Sigmoid colon (tissue), 7 donors: ENCODE measurements at regions of chr11 and their contacts with region 1.

Region 1: GRCh38 chr11:14773755-14774154 is 118.3 kb downstream of the CYP2R1 start:
- DNase-seq: no peak
- H3K4me3 ChIP-seq: no peak overlapping the region
- H3K27ac ChIP-seq: peak overlapping the region in 2 of 4 donors; percentile 24 to 40
- H3K4me1 ChIP-seq: peaks cover 0 to 46% (median 22%) of the 10 kb centered on the region in 4 donors
- H3K27me3 ChIP-seq: no peaks in the 10 kb centered on the region
- CTCF ChIP-seq: no peak
- EP300 ChIP-seq: no peak
- POLR2A ChIP-seq: no peak

Region 2: GRCh38 chr11:14537134-14537599 is 236.6 kb before region 1 on chr11:
- intact Hi-C with region 1: loop called (anchors 10 kb)
- DNase-seq: no peak
- H3K4me3 ChIP-seq: no peak overlapping the region
- H3K27ac ChIP-seq: peak overlapping the region in 3 of 4 donors; percentile 57 to 73 (median 73)
- H3K4me1 ChIP-seq: peaks cover 0 to 49% (median 46%) of the 10 kb centered on the region in 4 donors
- H3K27me3 ChIP-seq: no peaks in the 10 kb centered on the region
- CTCF ChIP-seq: peak; percentile 55 to 84 (median 72)
- EP300 ChIP-seq: no peak
- POLR2A ChIP-seq: no peak